ENCODE measurements at regions of chr10 and their contacts with region 1.

Region 1: DNA sequence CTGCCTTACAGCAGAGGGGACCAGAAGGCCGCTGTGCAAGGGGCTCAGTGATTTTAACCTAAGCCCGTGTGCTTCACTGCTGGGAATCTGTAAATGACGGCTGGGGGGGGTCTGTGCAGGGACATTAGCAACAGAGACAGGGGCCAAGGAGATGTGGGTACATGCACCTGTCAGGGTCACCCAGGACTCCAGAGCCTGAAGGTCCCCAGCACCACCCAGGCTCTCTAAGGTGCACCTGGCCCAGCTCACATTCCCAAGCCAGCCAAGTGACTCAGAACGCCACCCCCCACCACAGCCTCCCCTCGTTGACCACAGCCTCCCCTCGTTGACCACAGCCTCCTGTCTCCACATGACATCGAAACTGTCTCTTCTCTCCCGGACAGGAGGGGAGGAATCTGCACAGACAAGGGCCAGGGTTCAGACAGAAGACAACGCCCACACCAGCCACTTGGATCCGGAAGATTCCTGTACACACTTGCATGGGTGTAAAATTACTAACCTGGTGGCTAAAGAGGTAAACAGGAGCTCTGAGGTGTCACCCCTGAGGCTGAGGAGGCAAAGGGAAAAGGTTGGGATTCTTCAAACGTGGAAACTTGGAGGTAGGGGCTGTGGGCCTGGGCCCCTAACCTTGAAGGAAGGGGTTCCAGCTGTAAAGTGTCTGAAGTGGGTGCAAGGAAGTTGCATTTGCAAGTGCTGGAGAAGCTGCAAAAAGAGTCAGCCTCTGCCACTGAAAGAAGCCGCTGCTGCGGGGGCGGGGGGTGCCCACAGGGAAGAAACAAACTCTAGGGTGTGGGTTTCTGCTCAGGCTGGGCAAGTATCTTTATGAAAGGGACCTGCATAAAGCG is 27.0 kb downstream of the CALML3 start:
- DNase-seq: no peak
- H3K4me3 ChIP-seq: no peak overlapping the region
- CTCF ChIP-seq: no peak

Region 2: DNA sequence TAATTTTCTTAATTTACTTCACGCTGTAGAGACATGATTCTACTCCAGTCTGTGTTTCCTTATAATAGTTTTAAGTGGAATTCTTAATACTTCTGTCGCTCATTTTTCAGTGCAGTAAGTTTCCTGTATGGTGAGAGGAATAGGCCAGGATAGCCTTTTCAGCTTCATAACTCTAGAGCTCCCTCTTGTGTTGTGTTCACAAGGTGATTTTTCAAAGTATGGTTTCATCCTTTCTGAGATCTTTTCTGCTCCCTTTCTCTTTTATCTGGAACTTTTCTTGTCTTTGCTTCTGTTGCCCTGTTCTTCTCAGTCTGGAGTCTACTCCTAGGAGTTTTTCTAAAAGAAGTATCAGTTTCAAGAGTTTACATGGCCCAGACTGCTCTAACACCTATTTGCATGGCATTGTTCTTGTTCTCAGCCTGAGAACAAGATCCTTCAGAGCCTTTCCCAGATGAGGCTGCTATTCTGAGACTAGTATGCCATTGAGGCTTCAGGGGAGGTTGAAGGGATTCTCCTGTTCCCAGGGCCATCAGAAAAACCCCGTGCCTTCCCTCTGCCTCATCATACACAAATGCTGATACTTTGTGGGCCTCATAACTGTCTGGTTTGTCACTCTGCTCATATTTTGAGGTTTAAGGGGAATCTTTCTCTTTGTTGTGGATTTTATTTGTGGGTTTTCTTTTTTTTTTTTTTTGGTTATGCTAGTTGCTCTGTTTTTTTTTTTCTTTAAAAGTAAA is 117.6 kb before region 1 on chr10:
- in situ Hi-C with region 1: no loop called
- DNase-seq: peak; percentile 48
- H3K4me3 ChIP-seq: no peak overlapping the region
- CTCF ChIP-seq: peak; percentile 71

Region 3: DNA sequence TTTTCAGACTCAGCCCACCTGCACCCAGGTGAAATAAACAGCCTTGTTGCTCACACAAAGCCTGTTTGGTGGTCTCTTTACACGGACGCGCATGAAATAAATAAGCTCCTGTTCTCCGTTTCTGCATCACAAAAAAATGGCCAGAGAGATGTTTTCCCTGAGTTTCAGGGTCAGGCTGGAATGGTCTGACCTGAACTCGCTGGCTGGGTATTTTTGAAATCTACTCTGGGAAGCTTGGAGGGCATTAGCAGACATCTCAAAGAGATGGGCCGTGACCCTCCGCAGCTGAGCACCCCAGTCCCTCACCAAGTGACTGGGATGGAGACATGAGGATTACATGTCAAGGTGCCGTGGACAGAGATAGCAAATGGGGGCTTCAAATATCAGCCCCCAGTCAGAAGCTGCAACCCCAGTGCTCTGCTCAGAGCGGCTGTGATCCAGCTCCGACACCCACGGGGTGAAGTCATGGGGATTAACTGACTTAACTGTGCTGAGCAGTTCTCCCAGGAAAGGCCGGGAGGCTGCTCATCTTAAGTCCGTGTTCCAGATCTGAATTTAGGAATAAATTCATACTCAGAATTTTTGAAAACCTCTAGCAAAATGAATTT is 74.7 kb before region 1 on chr10:
- in situ Hi-C with region 1: no loop called
- DNase-seq: no peak
- H3K4me3 ChIP-seq: no peak overlapping the region
- CTCF ChIP-seq: no peak

Region 4: GRCh38 chr10:5490753-5491464 is 60.8 kb before region 1 on chr10:
- in situ Hi-C with region 1: loop called (anchors 10 kb)
- DNase-seq: no peak
- H3K4me3 ChIP-seq: no peak overlapping the region
- CTCF ChIP-seq: no peak

Region 5: GRCh38 chr10:6020826-6021225 is 469.1 kb after region 1 on chr10:
- in situ Hi-C with region 1: no loop called
- DNase-seq: no peak
- H3K4me3 ChIP-seq: no peak overlapping the region
- CTCF ChIP-seq: no peak